ENCODE measurements at regions of chr10 and their contacts with region 1.

Region 1: DNA sequence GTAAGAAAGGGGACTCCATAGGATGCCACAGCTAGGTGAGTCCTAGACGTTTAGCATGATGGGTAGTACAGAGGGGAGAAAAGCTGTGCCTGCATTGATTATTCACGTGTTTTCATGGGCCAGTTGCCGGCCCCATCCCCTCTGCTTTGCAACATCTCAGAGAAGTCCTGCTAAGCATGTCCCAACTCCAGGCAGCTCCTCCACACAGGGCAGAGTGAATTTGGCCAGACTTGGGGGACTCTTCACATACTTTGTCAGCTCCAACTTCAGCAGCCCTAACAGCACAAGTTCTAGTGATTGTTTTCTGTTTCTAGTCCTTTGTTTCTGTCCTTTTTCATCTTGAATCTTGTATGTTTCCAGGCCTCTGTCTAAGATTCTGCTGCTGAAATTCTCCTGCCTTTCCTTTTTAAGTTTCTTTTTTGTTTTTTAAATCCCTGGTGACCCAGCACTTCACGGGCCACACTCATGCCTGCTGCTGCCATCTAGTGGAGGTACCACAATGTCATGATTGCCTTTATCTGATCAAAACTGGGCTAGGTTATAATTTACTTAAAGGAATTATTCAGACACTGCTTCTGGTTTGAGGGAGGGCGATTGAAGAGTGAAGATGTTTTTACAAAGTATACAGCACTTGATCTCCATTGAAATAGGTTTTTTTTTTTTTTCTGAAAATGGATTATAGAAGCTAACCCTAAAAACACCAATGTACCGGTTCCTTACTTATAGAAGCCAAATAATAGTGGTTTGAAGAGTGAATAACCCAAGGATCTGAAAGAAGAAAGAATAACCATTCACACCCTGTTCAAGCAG is 276.9 kb downstream of the CSTF2T start:
- DNase-seq: no peak
- H3K4me3 ChIP-seq: no peak overlapping the region
- H3K27ac ChIP-seq: peak overlapping the region; percentile 38 to 53 (median 51)
- H3K4me1 ChIP-seq: peaks cover 13 to 20% (median 19%) of the 10 kb centered on the region in 4 donors
- H3K27me3 ChIP-seq: no peaks in the 10 kb centered on the region
- CTCF ChIP-seq: peak; percentile 70 to 79 (median 71)
- EP300 ChIP-seq: no peak
- POLR2A ChIP-seq: no peak

Region 2: DNA sequence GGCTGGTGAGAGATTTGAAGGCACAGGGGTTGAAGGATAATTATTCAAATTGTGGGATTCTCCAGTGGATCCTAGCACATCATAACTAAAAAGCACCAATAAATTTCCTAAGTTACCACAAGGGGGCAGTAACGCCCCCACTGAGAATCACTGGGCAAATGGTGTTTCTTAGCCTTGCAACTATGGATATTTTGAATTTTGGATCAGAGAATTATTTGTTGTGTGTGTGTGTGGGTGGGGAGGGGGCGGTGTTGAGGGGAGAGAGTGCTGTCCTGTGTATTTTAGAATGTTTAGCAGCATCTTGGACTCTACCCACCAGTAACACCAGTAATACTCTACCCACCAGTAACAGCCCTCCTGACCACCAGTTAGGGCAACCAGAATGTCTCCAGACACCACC is 411.5 kb before region 1 on chr10:
- intact Hi-C with region 1: loop called (anchors 5 kb)
- DNase-seq: no peak
- H3K4me3 ChIP-seq: no peak overlapping the region
- H3K27ac ChIP-seq: no peak overlapping the region
- H3K4me1 ChIP-seq: peaks cover 0 to 8% (median 3%) of the 10 kb centered on the region in 4 donors
- H3K27me3 ChIP-seq: no peaks in the 10 kb centered on the region
- CTCF ChIP-seq: peak; percentile 65 to 87 (median 69)
- EP300 ChIP-seq: no peak
- POLR2A ChIP-seq: no peak

Region 3: DNA sequence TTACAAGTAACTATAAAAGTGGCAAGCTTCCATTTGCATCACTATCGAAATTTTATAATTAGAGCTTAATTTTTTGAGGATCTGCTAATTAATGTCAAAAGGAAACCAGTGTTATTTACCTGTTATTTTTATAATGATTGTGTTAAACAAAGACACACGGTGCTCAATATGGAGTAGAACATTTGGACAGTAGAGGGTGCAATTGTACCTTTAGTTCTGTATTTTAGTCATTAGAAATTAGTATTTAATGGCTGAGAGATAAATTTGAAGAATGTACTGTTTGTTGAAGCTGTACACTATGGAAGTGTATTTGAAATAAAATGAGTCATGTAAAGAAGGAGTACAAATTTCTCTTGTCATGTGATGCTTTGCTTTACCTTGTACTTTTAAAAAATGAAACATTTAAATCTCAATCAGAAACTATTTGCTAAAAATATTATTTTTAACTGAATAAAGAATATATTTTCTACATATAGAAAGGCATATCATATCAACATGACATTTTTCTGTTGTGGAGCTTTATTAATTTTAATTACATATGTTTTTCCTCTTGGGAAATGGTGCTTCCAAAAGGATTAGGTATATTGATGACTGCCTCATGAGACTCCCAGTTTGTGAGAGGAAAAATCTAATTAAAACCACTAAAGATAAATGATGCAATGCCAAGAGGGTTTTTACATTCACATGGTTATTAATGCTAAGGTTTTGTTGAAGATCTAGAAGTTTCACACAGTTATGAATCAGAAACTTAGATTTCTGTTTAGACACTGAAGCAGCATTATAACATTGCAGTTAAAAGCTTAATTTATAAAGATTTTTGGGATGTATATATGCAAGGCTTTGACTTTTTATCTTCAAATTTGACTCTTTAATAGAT is 358.6 kb before region 1 on chr10:
- intact Hi-C with region 1: loop called (anchors 5 kb)
- DNase-seq: no peak
- H3K4me3 ChIP-seq: no peak overlapping the region
- H3K27ac ChIP-seq: no peak overlapping the region
- H3K4me1 ChIP-seq: peaks cover 0 to 4% (median 0%) of the 10 kb centered on the region in 4 donors
- H3K27me3 ChIP-seq: no peaks in the 10 kb centered on the region
- CTCF ChIP-seq: peak; percentile 62 to 73 (median 63)
- EP300 ChIP-seq: no peak
- POLR2A ChIP-seq: no peak

Region 4: GRCh38 chr10:51291961-51292360 is 130.6 kb before region 1 on chr10:
- intact Hi-C with region 1: no loop called
- DNase-seq: no peak
- H3K4me3 ChIP-seq: no peak overlapping the region
- H3K27ac ChIP-seq: no peak overlapping the region
- H3K4me1 ChIP-seq: no peaks in the 10 kb centered on the region
- H3K27me3 ChIP-seq: no peaks in the 10 kb centered on the region
- CTCF ChIP-seq: no peak
- EP300 ChIP-seq: no peak
- POLR2A ChIP-seq: no peak

Region 5: DNA sequence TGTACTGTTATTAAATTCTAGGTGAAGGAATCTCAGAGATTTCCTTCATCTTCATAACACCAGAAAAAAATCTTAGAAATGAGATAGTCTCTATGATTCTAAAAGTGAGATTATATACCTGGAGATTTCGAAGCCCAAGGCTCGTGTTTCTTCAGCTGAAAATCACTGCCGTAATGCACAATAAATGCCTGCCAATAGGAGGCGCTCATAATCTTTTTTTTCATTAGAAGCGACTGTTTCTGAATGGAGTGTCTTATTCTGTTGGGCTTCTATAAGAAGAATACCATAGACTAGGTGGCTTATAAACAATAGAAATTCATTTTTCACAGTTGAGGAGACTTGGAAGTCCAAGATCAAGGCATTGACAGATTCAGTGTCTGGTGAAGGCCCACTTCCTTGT is 53.6 kb before region 1 on chr10:
- intact Hi-C with region 1: no loop called
- DNase-seq: no peak
- H3K4me3 ChIP-seq: no peak overlapping the region
- H3K27ac ChIP-seq: no peak overlapping the region
- H3K4me1 ChIP-seq: peaks cover 6 to 31% (median 16%) of the 10 kb centered on the region in 4 donors
- H3K27me3 ChIP-seq: no peaks in the 10 kb centered on the region
- CTCF ChIP-seq: no peak
- EP300 ChIP-seq: no peak
- POLR2A ChIP-seq: no peak

Region 6: GRCh38 chr10:51389415-51390321 is 32.8 kb before region 1 on chr10:
- intact Hi-C with region 1: loop called (anchors 2 kb)
- DNase-seq: no peak
- H3K4me3 ChIP-seq: no peak overlapping the region
- H3K27ac ChIP-seq: no peak overlapping the region
- H3K4me1 ChIP-seq: peaks cover 4 to 19% (median 8%) of the 10 kb centered on the region in 4 donors
- H3K27me3 ChIP-seq: no peaks in the 10 kb centered on the region
- CTCF ChIP-seq: peak; percentile 33 to 58 (median 39)
- EP300 ChIP-seq: no peak
- POLR2A ChIP-seq: no peak

Measured in esophagus muscularis mucosa (tissue), 4 donors.